ENCODE measurements at regions of chr5 and their contacts with region 1.

Region 1: GRCh38 chr5:100860407-100860806 is 42.7 kb downstream of the ST8SIA4 start:
- DNase-seq: peak; percentile 35
- ATAC-seq: peak; percentile 53
- H3K4me3 Mint-ChIP-seq: no peak overlapping the region
- H3K27ac Mint-ChIP-seq: peak overlapping the region; percentile 87
- H3K4me1 Mint-ChIP-seq: peaks cover 74% of the 10 kb centered on the region
- H3K27me3 Mint-ChIP-seq: no peaks in the 10 kb centered on the region

Region 2: GRCh38 chr5:100827481-100827889 is 32.9 kb before region 1 on chr5:
- CTCF ChIA-PET with region 1: no interaction called
- POLR2A ChIA-PET with region 1: no interaction called
- intact Hi-C with region 1: loop called (anchors 2 to 5 kb)
- DNase-seq: no peak
- ATAC-seq: peak; percentile 31
- H3K4me3 Mint-ChIP-seq: no peak overlapping the region
- H3K27ac Mint-ChIP-seq: peak overlapping the region; percentile 85
- H3K4me1 Mint-ChIP-seq: peaks cover 42% of the 10 kb centered on the region
- H3K27me3 Mint-ChIP-seq: no peaks in the 10 kb centered on the region

Region 3: DNA sequence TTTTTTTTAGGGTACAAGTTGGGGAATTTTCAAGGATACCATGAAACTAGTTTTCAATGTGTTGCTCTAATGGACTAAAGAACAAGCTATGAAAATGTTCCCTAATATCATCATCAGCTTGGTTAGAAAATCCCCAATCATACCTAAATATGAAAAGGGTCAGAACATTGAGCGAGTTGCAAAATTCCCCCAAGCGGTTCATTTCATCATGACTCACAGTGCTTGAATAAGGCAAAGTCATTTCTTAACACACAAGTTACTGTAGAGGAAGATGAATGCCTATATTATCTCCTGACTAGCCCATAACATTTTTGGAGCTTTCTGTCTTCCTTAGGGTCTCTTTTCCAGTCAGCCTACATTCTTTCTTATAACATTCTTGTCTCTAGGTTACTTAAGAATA is 20.0 kb before region 1 on chr5:
- CTCF ChIA-PET with region 1: interaction called, 6 read pairs
- POLR2A ChIA-PET with region 1: interaction called, 5 read pairs
- intact Hi-C with region 1: loop called in 1 of 2 experiments (anchors 1 kb)
- DNase-seq: peak; percentile 55
- ATAC-seq: peak; percentile 84
- H3K4me3 Mint-ChIP-seq: peak overlapping the region; percentile 33
- H3K27ac Mint-ChIP-seq: peak overlapping the region; percentile 87
- H3K4me1 Mint-ChIP-seq: peaks cover 71% of the 10 kb centered on the region
- H3K27me3 Mint-ChIP-seq: no peaks in the 10 kb centered on the region

Region 4: GRCh38 chr5:100872408-100873190 is 12.2 kb after region 1 on chr5:
- CTCF ChIA-PET with region 1: interaction called, 5 read pairs
- POLR2A ChIA-PET with region 1: no interaction called
- intact Hi-C with region 1: loop called in 1 of 2 experiments (anchors 1 kb)
- DNase-seq: peak; percentile 44
- ATAC-seq: peak; percentile 97
- H3K4me3 Mint-ChIP-seq: no peak overlapping the region
- H3K27ac Mint-ChIP-seq: peak overlapping the region; percentile 82
- H3K4me1 Mint-ChIP-seq: peaks cover 60% of the 10 kb centered on the region
- H3K27me3 Mint-ChIP-seq: no peaks in the 10 kb centered on the region

Region 5: GRCh38 chr5:100890461-100891008 is 30.1 kb after region 1 on chr5:
- CTCF ChIA-PET with region 1: interaction called, 4 read pairs
- POLR2A ChIA-PET with region 1: no interaction called
- intact Hi-C with region 1: loop called (anchors 2 kb)
- DNase-seq: no peak
- ATAC-seq: peak; percentile 66
- H3K4me3 Mint-ChIP-seq: peak overlapping the region; percentile 55
- H3K27ac Mint-ChIP-seq: peak overlapping the region; percentile 88
- H3K4me1 Mint-ChIP-seq: peaks cover 66% of the 10 kb centered on the region
- H3K27me3 Mint-ChIP-seq: no peaks in the 10 kb centered on the region

Measured in activated CD4-positive, alpha-beta T cell treated with anti-CD3 and anti-CD28 coated beads for 36 hours (primary cell).